Heart right ventricle (tissue), 16 donors: ENCODE measurements at regions of chr3 and their contacts with region 1.

Region 1: GRCh38 chr3:58414538-58415197 is 19.0 kb downstream of the PDHB start:
- DNase-seq: peak; percentile 38 to 53
- ATAC-seq: peak; percentile 58 to 84 (median 66)
- H3K4me3 ChIP-seq: no peak overlapping the region
- H3K27ac ChIP-seq: peak overlapping the region in 4 of 10 donors; percentile 2 to 53 (median 13)
- H3K4me1 ChIP-seq: peaks cover 0 to 28% (median 13%) of the 10 kb centered on the region in 9 donors
- H3K27me3 ChIP-seq: no peaks in the 10 kb centered on the region
- CTCF ChIP-seq: peak; percentile 74 to 87 (median 81)

Region 2: GRCh38 chr3:58177747-58178527 is 236.7 kb before region 1 on chr3:
- intact Hi-C with region 1: loop called in 7 of 10 experiments (anchors 5 to 10 kb)
- DNase-seq: peak; percentile 90 to 94
- ATAC-seq: peak; percentile 80 to 87 (median 86)
- H3K4me3 ChIP-seq: peak overlapping the region in 9 of 10 donors; percentile 35 to 60 (median 50)
- H3K27ac ChIP-seq: peak overlapping the region in 1 of 10 donors; percentile 8
- H3K4me1 ChIP-seq: peaks cover 14 to 52% (median 42%) of the 10 kb centered on the region in 9 donors
- H3K27me3 ChIP-seq: peaks cover 0 to 7% (median 0%) of the 10 kb centered on the region in 7 donors
- CTCF ChIP-seq: peak; percentile 89 to 97 (median 95)

Region 3: GRCh38 chr3:58188173-58188564 is 226.5 kb before region 1 on chr3:
- intact Hi-C with region 1: loop called in 6 of 10 experiments (anchors 10 kb)
- DNase-seq: no peak
- ATAC-seq: no peak
- H3K4me3 ChIP-seq: no peak overlapping the region
- H3K27ac ChIP-seq: peak overlapping the region in 5 of 10 donors; percentile 33 to 59 (median 50)
- H3K4me1 ChIP-seq: peaks cover 0 to 26% (median 18%) of the 10 kb centered on the region in 9 donors
- H3K27me3 ChIP-seq: no peaks in the 10 kb centered on the region
- CTCF ChIP-seq: no peak

Region 4: GRCh38 chr3:58317811-58318210 is 96.9 kb before region 1 on chr3:
- intact Hi-C with region 1: loop called in 6 of 10 experiments (anchors 2 to 10 kb)
- DNase-seq: no peak
- ATAC-seq: no peak
- H3K4me3 ChIP-seq: no peak overlapping the region
- H3K27ac ChIP-seq: peak overlapping the region in 1 of 10 donors; percentile 13
- H3K4me1 ChIP-seq: peaks cover 3 to 21% (median 13%) of the 10 kb centered on the region in 9 donors
- H3K27me3 ChIP-seq: no peaks in the 10 kb centered on the region
- CTCF ChIP-seq: no peak

Region 5: GRCh38 chr3:58324391-58325390 is 90.0 kb before region 1 on chr3:
- intact Hi-C with region 1: loop called in 6 of 10 experiments (anchors 2 to 10 kb)
- DNase-seq: no peak
- ATAC-seq: no peak
- H3K4me3 ChIP-seq: no peak overlapping the region
- H3K27ac ChIP-seq: peak overlapping the region in 7 of 10 donors; percentile 16 to 72 (median 36)
- H3K4me1 ChIP-seq: peaks cover 0 to 25% (median 14%) of the 10 kb centered on the region in 9 donors
- H3K27me3 ChIP-seq: no peaks in the 10 kb centered on the region
- CTCF ChIP-seq: no peak

Region 6: GRCh38 chr3:58332575-58333188 is 82.0 kb before region 1 on chr3 and contains the start of gene PXK:
- intact Hi-C with region 1: loop called in 7 of 10 experiments (anchors 5 to 10 kb)
- DNase-seq: peak; percentile 78 to 85
- ATAC-seq: peak; percentile 93 to 98 (median 96)
- H3K4me3 ChIP-seq: peak within 1 kb of the TSS; percentile 61 to 95 (median 79)
- H3K27ac ChIP-seq: peak within 1 kb of the TSS in 9 of 10 donors; percentile 43 to 89 (median 70)
- H3K4me1 ChIP-seq: peaks cover 3 to 41% (median 19%) of the 10 kb centered on the region in 9 donors
- H3K27me3 ChIP-seq: no peaks in the 10 kb centered on the region
- CTCF ChIP-seq: peak in 5 of 9 donors; percentile 6 to 42 (median 21)
- total RNA-seq, gene PXK: 7.9 to 16.3 (median 11.7) TPM

Region 7: DNA sequence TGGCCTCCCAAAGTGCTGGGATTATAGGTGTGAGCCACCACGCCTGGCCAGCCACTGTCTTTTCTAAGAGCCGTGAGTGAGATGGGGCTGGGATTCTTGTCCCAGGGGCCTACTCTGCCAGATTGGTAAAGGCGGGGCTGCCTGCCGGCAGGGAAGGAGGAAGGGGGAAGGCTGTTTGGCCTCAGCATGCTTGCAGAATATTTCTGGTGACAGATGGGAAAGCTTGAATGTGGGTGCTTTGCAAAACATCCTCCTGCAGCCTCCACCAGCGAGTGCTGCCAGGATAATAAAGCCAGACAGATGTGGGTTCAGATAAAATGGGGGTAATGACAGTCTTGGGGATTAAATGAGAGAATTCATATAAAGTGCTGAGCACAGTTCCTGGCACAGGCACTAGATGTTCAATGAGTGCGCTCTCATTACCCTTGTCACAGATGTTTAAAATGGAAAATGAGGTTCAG is 142.1 kb after region 1 on chr3:
- intact Hi-C with region 1: no loop called
- DNase-seq: no peak
- ATAC-seq: peak in 2 of 8 donors; percentile 24 to 35
- H3K4me3 ChIP-seq: no peak overlapping the region
- H3K27ac ChIP-seq: no peak overlapping the region
- H3K4me1 ChIP-seq: peaks cover 0 to 8% (median 0%) of the 10 kb centered on the region in 9 donors
- H3K27me3 ChIP-seq: no peaks in the 10 kb centered on the region
- CTCF ChIP-seq: no peak